Dendritic cell treated with granulocyte-macrophage colony-stimulating factor and Interleukin-4, amounts not matched to agents 40 ng/mL and 50 ng/mL, for 4 days (primary cell): ENCODE measurements at regions of chr22 and their contacts with region 1.

Region 1: GRCh38 chr22:42376711-42377554 is 55.3 kb downstream of the NFAM1 start:
- H3K4me3 Mint-ChIP-seq: no peak overlapping the region
- H3K27ac Mint-ChIP-seq: peak overlapping the region; percentile 79
- H3K4me1 Mint-ChIP-seq: peaks cover 40% of the 10 kb centered on the region
- H3K27me3 Mint-ChIP-seq: peaks cover 34% of the 10 kb centered on the region

Region 2: DNA sequence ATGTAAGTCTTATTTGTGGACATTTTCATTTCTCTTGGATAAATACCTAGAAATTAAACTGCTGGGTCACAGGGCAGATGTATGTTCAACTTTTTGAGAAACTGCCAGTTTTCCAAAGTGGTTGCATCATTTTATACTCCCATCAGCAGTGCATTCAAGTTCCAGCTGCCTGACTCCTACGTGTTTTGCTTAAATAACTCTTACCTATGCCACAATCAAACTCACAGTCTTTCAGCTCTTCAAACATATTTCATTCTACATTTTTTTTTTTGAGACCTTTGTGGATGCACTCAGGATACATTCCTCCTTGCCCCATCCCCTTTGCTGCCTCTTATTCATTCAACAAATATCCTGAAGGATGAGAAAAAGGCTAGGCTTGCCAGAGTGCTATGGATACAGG is 115.6 kb before region 1 on chr22:
- intact Hi-C with region 1: no loop called
- H3K4me3 Mint-ChIP-seq: no peak overlapping the region
- H3K27ac Mint-ChIP-seq: no peak overlapping the region
- H3K4me1 Mint-ChIP-seq: peaks cover 68% of the 10 kb centered on the region
- H3K27me3 Mint-ChIP-seq: no peaks in the 10 kb centered on the region

Region 3: DNA sequence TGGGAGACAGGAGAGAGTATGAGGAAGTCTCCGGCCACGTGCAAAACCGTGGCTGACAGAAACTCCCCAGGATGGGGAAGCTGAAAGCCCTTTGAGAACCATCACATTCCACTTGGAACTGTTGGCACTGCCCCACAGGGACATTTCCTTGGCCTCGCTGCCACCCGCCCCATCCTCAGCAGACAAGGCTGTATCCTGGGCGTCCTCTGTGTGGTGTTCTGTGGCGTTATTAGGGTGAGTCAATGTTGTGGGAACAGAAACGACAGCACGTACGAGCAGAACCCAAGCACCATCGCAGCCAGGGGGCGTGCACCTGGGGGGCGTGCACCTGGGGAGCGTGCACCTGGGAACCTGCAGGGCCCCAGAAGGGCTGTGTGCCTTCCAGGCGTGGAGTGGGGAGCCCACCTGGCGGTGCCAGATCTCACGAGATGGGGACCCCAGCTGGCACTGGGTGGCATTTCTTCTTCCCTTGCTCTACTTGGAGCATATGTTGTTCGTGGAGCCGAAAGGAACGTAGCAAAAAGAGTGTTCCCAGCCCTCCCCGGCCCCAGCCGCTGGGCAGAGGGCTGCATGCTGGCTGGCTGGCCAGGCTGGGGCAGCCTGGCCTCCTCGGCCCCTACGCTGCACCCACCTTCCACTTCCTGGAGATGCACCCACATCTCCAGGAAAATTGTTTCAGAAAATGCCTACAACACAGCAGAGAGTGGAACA is 19.8 kb after region 1 on chr22:
- intact Hi-C with region 1: loop called (anchors 2 kb)
- H3K4me3 Mint-ChIP-seq: peak overlapping the region; percentile 48
- H3K27ac Mint-ChIP-seq: peak overlapping the region; percentile 86
- H3K4me1 Mint-ChIP-seq: peaks cover 58% of the 10 kb centered on the region
- H3K27me3 Mint-ChIP-seq: peaks cover 25% of the 10 kb centered on the region

Region 4: GRCh38 chr22:42520663-42521546 is 144.0 kb after region 1 on chr22:
- intact Hi-C with region 1: no loop called
- H3K4me3 Mint-ChIP-seq: no peak overlapping the region
- H3K27ac Mint-ChIP-seq: no peak overlapping the region
- H3K4me1 Mint-ChIP-seq: peaks cover 11% of the 10 kb centered on the region
- H3K27me3 Mint-ChIP-seq: no peaks in the 10 kb centered on the region